CD4-positive, alpha-beta memory T cell (primary cell): ENCODE measurements at regions of chr1 and their contacts with region 1.

Region 1: DNA sequence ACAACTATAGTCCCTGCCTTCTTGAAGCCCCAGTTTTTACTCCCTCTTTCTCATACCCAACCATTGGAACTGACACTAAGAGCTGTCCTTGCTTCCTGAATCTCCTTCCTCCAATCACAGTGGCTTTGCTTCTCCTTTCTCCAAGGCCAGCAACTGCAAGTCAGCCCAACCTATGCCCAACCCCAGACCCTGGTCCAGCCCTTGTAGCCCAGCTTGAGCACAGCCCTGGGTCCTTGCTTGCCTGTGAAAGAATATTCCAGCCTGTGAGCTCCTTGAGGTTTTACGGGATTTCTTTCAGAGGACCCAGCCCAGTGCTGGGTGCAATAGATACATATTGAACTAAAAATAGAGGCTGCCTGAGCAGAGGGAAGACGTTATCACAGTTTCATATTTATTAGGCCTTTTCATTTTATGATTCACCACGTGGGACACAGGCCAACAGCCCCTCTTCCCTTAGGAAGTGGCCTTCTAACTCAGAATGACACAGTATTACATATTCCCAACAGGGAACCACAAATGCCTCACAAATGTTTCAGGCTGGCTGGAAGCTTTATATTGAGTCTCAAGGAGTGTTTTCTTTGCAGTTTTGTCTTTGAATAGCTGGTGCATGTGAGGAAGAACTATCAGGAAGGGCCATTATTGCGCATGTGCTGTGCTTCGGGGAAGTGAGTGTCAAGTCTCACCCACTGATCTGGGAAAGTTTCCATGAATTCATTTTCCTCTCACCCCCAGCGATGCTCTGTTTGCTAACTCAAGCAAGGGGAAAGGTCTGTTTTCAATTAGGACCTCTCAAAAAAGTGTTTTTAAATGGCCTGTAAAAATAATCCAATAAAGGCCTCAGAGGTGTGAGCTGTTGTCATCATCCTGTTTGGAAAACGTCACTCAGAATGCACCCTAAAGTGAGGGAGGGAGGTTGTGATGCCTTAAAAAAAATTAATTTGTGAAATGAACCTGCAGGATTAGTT is 92.3 kb upstream of the NFIA start:
- DNase-seq: no peak
- H3K4me3 ChIP-seq: no peak overlapping the region
- H3K4me3 Mint-ChIP-seq: no peak overlapping the region
- H3K27ac ChIP-seq: no peak overlapping the region
- H3K27ac Mint-ChIP-seq: no peak overlapping the region
- H3K4me1 ChIP-seq: no peaks in the 10 kb centered on the region
- H3K4me1 Mint-ChIP-seq: no peaks in the 10 kb centered on the region
- H3K27me3 ChIP-seq: no peaks in the 10 kb centered on the region
- H3K27me3 Mint-ChIP-seq: peaks cover 2 to 3% of the 10 kb centered on the region in 2 donors

Region 2: GRCh38 chr1:61005614-61006580 is 15.9 kb after region 1 on chr1:
- CTCF ChIA-PET with region 1: no interaction called
- POLR2A ChIA-PET with region 1: no interaction called
- intact Hi-C with region 1: no loop called
- DNase-seq: no peak
- H3K4me3 ChIP-seq: no peak overlapping the region
- H3K4me3 Mint-ChIP-seq: no peak overlapping the region
- H3K27ac ChIP-seq: no peak overlapping the region
- H3K27ac Mint-ChIP-seq: no peak overlapping the region
- H3K4me1 ChIP-seq: no peaks in the 10 kb centered on the region
- H3K4me1 Mint-ChIP-seq: no peaks in the 10 kb centered on the region
- H3K27me3 ChIP-seq: no peaks in the 10 kb centered on the region
- H3K27me3 Mint-ChIP-seq: peaks cover 5 to 20% of the 10 kb centered on the region in 2 donors

Region 3: DNA sequence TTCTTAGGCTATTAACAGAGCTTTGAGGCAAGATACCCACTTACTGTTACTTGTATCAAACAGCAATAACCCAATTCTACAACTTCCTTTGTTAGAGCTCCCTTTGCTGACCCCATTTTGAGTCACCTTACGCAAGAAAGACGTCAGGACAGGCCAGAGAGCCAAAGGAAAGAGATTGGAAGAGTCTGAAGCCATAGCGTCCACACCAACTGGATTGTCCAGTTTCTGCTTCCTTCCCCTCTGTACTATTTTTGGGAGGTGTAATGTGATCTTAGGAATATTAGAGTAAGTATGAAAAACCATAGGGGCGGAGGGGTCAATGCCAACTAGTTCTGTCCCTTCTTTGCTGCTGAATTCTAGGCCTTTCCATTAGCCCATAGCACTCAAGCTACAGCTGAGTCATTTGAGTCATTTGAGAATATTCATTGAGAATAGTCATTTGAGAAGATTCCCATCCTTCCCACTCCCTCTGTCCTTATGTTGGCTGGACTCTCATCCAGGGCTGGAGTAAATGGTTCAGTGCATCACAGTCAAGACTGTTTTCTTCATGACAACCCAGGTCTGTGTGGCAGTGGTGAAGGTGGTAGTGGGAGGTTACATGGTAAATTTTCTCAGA is 77.5 kb after region 1 on chr1:
- CTCF ChIA-PET with region 1: no interaction called
- POLR2A ChIA-PET with region 1: no interaction called
- intact Hi-C with region 1: no loop called
- DNase-seq: no peak
- H3K4me3 ChIP-seq: no peak overlapping the region
- H3K4me3 Mint-ChIP-seq: no peak overlapping the region
- H3K27ac ChIP-seq: no peak overlapping the region
- H3K27ac Mint-ChIP-seq: no peak overlapping the region
- H3K4me1 ChIP-seq: no peaks in the 10 kb centered on the region
- H3K4me1 Mint-ChIP-seq: no peaks in the 10 kb centered on the region
- H3K27me3 ChIP-seq: no peaks in the 10 kb centered on the region
- H3K27me3 Mint-ChIP-seq: no peaks in the 10 kb centered on the region

Region 4: GRCh38 chr1:61588736-61589672 is 599.0 kb after region 1 on chr1:
- CTCF ChIA-PET with region 1: no interaction called
- POLR2A ChIA-PET with region 1: no interaction called
- intact Hi-C with region 1: loop called (anchors 10 kb)
- DNase-seq: peak in 4 of 5 donors; percentile 25 to 40 (median 38)
- H3K4me3 ChIP-seq: no peak overlapping the region
- H3K4me3 Mint-ChIP-seq: no peak overlapping the region
- H3K27ac ChIP-seq: no peak overlapping the region
- H3K27ac Mint-ChIP-seq: no peak overlapping the region
- H3K4me1 ChIP-seq: no peaks in the 10 kb centered on the region
- H3K4me1 Mint-ChIP-seq: no peaks in the 10 kb centered on the region
- H3K27me3 ChIP-seq: no peaks in the 10 kb centered on the region
- H3K27me3 Mint-ChIP-seq: peaks cover 11 to 24% of the 10 kb centered on the region in 2 donors